Left ventricle myocardium inferior (tissue), 1 donor: ENCODE measurements at regions of chr2 and their contacts with region 1.

Region 1: GRCh38 chr2:68715353-68716041 is 19.1 kb upstream of the ARHGAP25 start:
- DNase-seq: no peak
- H3K4me3 ChIP-seq: no peak overlapping the region
- H3K27ac ChIP-seq: peak overlapping the region; percentile 34
- H3K4me1 ChIP-seq: peaks cover 12% of the 10 kb centered on the region
- H3K27me3 ChIP-seq: peaks cover 15% of the 10 kb centered on the region
- CTCF ChIP-seq: peak; percentile 73

Region 2: DNA sequence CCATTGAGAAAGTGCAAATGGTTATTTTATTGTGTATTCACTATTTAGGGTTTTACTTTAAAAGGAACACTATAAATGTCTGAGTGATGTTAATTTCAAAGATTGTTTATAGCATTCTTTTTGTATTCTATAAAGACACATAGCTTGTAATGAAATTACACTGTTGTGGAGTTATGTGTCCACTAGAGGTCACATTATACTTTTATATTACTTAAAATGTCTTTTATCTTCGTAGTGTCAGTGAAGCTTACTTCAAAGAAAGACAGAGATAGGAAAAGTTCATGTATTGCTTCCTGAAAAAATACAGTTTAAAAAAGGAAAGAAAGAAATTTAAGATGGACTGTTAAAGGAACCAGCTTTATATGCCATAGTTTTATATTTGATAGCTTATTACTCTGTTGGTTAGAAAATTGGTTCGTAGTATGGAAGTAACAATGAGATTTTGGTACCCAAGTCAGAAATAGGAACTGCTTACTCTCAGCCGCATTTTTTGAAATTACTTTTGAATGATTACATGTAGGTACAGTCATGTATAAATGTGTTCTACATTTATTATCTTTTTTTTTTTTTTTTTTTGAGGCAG is 227.6 kb before region 1 on chr2:
- intact Hi-C with region 1: loop called (anchors 10 kb)
- DNase-seq: no peak
- H3K4me3 ChIP-seq: no peak overlapping the region
- H3K27ac ChIP-seq: no peak overlapping the region
- H3K4me1 ChIP-seq: no peaks in the 10 kb centered on the region
- H3K27me3 ChIP-seq: no peaks in the 10 kb centered on the region
- CTCF ChIP-seq: peak; percentile 68

Region 3: DNA sequence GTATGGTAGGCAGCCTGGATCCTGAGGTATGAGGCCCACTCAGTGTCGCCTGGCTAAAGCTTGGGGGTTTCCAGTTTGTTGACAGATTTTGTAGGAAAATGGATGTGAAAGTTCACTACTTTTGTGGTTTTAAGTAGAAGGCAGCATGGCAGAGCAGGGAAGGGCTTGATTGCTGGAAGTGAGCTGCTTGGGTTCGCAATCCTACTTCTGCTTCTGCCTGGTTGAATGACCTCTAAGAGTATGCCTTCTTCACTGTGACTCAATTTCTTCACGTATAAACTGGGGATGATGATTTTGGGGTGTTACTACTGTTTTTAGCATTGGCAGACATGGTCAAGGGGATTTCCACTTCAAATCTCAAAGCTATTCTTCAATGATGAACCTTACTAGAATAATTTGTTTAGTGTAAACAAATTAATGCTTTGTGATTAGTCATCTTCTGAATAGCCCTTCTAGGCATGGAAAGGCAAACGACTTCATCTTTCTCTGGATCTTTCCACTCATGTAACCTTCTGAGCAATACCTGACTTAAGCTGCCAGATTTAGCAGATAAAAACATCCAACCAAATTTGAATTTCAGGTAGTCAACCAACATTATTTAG is 142.5 kb after region 1 on chr2:
- intact Hi-C with region 1: no loop called
- DNase-seq: no peak
- H3K4me3 ChIP-seq: no peak overlapping the region
- H3K27ac ChIP-seq: no peak overlapping the region
- H3K4me1 ChIP-seq: peaks cover 10% of the 10 kb centered on the region
- H3K27me3 ChIP-seq: peaks cover 89% of the 10 kb centered on the region
- CTCF ChIP-seq: no peak